Tibial artery (tissue), 4 donors: ENCODE measurements at regions of chr17 and their contacts with region 1.

Region 1: DNA sequence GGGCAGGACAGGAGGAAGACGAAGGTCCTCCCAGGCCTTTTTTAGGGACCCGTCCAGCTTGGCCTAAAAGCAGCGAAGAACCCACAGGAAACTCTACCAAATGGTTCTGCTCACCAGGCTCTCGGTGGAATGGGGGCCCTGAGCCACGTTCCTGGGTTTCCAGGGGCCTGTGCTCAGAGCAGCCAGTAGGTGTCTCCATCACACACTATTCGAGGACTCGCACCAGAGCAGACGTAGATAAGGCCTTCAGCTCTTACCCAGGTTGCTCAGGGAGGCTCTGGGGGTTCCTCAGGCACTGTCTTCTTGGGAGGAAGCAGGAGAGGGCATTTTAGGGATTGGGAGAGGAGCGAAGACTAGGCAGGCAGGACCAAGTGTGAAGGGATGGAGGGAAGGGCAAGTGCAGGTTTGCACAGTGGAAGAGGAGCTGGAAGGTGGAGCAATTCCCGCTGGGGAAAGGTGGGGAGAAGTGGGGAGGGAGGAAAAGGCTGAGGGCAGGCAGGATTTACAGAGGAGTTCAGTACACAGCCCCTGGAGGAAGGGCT is 157.1 kb downstream of the RGS9 start:
- DNase-seq: peak in 1 of 2 donors; percentile 36
- H3K4me3 ChIP-seq: no peak overlapping the region
- H3K27ac ChIP-seq: no peak overlapping the region
- H3K4me1 ChIP-seq: peaks cover 0 to 7% (median 3%) of the 10 kb centered on the region in 4 donors
- H3K27me3 ChIP-seq: no peaks in the 10 kb centered on the region
- CTCF ChIP-seq: peak; percentile 66 to 70

Region 2: DNA sequence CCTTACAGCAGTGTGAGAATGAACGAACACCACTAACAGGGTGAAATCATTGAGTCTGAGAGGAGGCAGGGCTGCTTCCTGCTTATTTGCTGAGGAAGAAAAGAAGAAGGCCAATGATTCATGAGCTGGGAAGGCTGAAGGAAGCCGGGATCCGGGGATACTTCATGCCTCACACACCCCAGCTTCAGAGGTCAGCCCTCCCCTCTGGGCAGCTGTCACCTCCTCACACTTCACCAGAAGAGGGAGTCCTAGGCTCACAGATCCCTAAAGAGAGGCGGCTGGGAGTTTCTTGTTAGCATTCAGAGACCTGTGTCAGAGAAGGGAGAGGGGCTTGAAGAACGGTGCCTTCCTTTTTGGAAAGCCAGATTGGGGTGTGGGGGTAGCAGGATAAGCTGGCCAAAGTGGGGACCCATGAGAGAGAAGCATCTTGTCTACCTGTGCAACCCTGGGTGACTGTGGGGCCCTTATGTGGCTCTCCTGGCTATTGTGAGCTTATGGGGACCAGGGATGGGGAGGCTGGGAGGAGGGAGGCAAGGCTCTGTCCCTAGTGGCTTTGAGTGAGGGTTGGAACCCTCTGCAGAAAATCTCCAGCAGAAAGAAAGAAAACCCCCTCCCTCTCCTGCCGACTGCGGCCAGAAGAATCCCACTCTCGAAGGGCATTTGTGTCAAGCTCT is 62.5 kb before region 1 on chr17:
- intact Hi-C with region 1: loop called (anchors 2 kb)
- DNase-seq: no peak
- H3K4me3 ChIP-seq: no peak overlapping the region
- H3K27ac ChIP-seq: no peak overlapping the region
- H3K4me1 ChIP-seq: peaks cover 0 to 3% (median 0%) of the 10 kb centered on the region in 4 donors
- H3K27me3 ChIP-seq: peaks cover 0 to 20% of the 10 kb centered on the region in 2 donors
- CTCF ChIP-seq: peak; percentile 42 to 46

Region 3: GRCh38 chr17:66165513-66166123 is 871.4 kb after region 1 on chr17:
- intact Hi-C with region 1: loop called (anchors 10 kb)
- DNase-seq: no peak
- H3K4me3 ChIP-seq: no peak overlapping the region
- H3K27ac ChIP-seq: no peak overlapping the region
- H3K4me1 ChIP-seq: no peaks in the 10 kb centered on the region
- H3K27me3 ChIP-seq: no peaks in the 10 kb centered on the region
- CTCF ChIP-seq: peak; percentile 61 to 79